GM12878 (cell line): ENCODE measurements at regions of chr1 and their contacts with region 1.

Region 1: GRCh38 chr1:1906185-1907097 is 8.6 kb upstream of the CALML6 start:
- DNase-seq: no peak
- ATAC-seq: peak; percentile 74
- H3K4me3 ChIP-seq: no peak overlapping the region
- H3K27ac ChIP-seq: no peak overlapping the region
- H3K4me1 ChIP-seq: peaks cover 22% of the 10 kb centered on the region
- H3K27me3 ChIP-seq: no peaks in the 10 kb centered on the region
- CTCF ChIP-seq: peak; percentile 93 to 97 (median 95)
- EP300 ChIP-seq: no peak
- POLR2A ChIP-seq: no peak
- RAD21 ChIP-seq: peak; percentile 96

Region 2: GRCh38 chr1:1777950-1778662 is 128.3 kb before region 1 on chr1 and contains the start of gene NADK:
- CTCF ChIA-PET with region 1: interaction called, 16 read pairs
- POLR2A ChIA-PET with region 1: interaction called, 14 read pairs
- RAD21 ChIA-PET with region 1: interaction called, 33 read pairs
- SMC1A ChIA-PET with region 1: interaction called, 15 read pairs
- in situ Hi-C with region 1: loop called (anchors 10 kb)
- intact Hi-C with region 1: loop called (anchors 1 kb)
- DNase-seq: no peak
- ATAC-seq: peak; percentile 17
- H3K4me3 ChIP-seq: peak within 1 kb of the TSS; percentile 68
- H3K27ac ChIP-seq: peak within 1 kb of the TSS; percentile 98
- H3K4me1 ChIP-seq: peaks cover 52% of the 10 kb centered on the region
- H3K27me3 ChIP-seq: no peaks in the 10 kb centered on the region
- CTCF ChIP-seq: no peak
- EP300 ChIP-seq: no peak
- POLR2A ChIP-seq: peak; percentile 60
- RAD21 ChIP-seq: no peak
- polyA plus RNA-seq, gene NADK: 1.1 to 3.6 TPM

Region 3: GRCh38 chr1:1799716-1800115 is 106.7 kb before region 1 on chr1:
- CTCF ChIA-PET with region 1: interaction called, 12 read pairs
- POLR2A ChIA-PET with region 1: no interaction called
- RAD21 ChIA-PET with region 1: interaction called, 5 read pairs
- SMC1A ChIA-PET with region 1: interaction called, 8 read pairs
- in situ Hi-C with region 1: no loop called
- intact Hi-C with region 1: loop called (anchors 5 kb)
- DNase-seq: peak; percentile 62
- ATAC-seq: peak; percentile 98
- H3K4me3 ChIP-seq: no peak overlapping the region
- H3K27ac ChIP-seq: peak overlapping the region; percentile 13; the same call in 1 of the 2 replicates
- H3K4me1 ChIP-seq: peaks cover 42% of the 10 kb centered on the region
- H3K27me3 ChIP-seq: no peaks in the 10 kb centered on the region
- CTCF ChIP-seq: no peak
- EP300 ChIP-seq: peak in 1 of 2 experiments; percentile 28; a peak in 2 of 4 replicates
- POLR2A ChIP-seq: no peak
- RAD21 ChIP-seq: 0 out of 2 replicates have a peak, but pooled peaks have one; percentile 9

Region 4: DNA sequence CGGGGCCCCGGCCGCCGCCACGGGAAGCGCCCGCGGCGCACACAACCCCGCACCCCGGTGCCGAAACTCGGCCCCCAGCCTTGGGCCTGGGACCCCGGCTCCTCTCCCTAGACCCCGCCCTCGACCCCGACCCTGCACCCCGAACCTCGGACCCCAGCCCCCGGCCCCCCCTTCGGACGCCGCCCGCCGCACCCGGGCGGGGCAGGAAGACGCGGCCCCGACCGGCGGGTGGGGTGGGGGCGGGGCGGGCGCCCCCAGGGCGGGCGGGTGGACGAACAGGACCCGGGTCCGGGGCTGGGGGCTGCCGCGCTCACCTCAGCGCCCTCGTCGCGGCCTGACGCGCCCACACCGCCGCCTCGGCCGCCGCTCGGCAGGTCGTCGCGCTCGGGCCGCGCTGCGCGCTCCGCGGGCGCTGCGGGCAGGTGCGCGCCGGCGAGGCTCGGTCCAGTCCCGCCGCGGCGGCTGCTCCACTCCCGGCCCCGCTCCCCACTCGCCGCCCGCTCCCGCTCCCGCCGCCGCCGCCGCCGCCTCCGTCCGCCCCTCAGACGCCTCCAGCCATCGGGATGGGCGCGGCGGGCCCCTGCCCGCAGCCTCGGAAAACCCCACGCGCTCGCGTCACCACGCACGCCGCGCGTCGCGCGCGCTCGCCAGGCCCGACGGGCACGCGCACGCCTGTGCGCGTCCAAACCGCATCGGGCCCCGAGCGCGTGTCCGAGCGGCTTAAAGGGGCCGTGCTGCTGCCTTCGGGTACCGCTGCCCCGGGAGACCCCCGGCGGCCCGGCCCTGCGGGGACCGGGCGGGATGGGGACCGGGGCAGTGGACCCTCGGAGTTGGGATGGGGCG is 15.7 kb before region 1 on chr1 and contains the start of gene GNB1:
- CTCF ChIA-PET with region 1: interaction called, 26 read pairs
- POLR2A ChIA-PET with region 1: interaction called, 4 read pairs
- RAD21 ChIA-PET with region 1: interaction called, 28 read pairs
- SMC1A ChIA-PET with region 1: interaction called, 3 read pairs
- in situ Hi-C with region 1: no loop called
- intact Hi-C with region 1: no loop called
- DNase-seq: peak; percentile 48
- ATAC-seq: peak; percentile 61
- H3K4me3 ChIP-seq: peak within 1 kb of the TSS; percentile 97
- H3K27ac ChIP-seq: peak within 1 kb of the TSS; percentile 84
- H3K4me1 ChIP-seq: peaks cover 21% of the 10 kb centered on the region
- H3K27me3 ChIP-seq: no peaks in the 10 kb centered on the region
- CTCF ChIP-seq: no peak
- EP300 ChIP-seq: 0 out of 4 replicates have a peak, but pooled peaks of 1 of the 2 experiments have one; percentile 12
- POLR2A ChIP-seq: 0 out of 2 replicates have a peak, but pooled peaks have one; percentile 38
- RAD21 ChIP-seq: no peak
- polyA plus RNA-seq, gene GNB1: 41.0 to 53.7 TPM

Region 5: DNA sequence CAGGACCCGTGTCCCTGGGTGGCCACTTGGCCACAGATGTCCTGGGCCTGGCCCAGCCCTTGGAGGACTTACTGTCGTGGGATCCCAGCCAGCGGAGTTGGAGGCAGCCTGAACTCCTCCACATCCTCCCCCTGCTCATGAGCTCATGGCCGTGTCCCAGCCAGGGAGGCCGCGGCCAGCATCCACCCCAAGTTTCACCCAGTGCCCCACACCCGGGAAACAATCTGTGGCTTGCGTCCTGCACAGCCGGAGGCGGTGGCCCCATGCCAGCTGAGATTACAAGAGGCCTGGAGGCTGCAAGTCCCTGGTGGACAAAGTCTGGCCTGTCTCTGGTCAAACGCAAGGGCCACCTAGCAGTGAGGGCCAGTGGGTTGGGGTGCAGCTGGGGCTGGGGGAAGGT is 40.1 kb after region 1 on chr1:
- CTCF ChIA-PET with region 1: no interaction called
- POLR2A ChIA-PET with region 1: no interaction called
- RAD21 ChIA-PET with region 1: no interaction called
- SMC1A ChIA-PET with region 1: no interaction called
- in situ Hi-C with region 1: no loop called
- intact Hi-C with region 1: no loop called
- DNase-seq: no peak
- ATAC-seq: no peak
- H3K4me3 ChIP-seq: no peak overlapping the region
- H3K27ac ChIP-seq: no peak overlapping the region
- H3K4me1 ChIP-seq: no peaks in the 10 kb centered on the region
- H3K27me3 ChIP-seq: no peaks in the 10 kb centered on the region
- CTCF ChIP-seq: no peak
- EP300 ChIP-seq: no peak
- POLR2A ChIP-seq: no peak
- RAD21 ChIP-seq: no peak